A549 (cell line): ENCODE measurements at regions of chr3 and their contacts with region 1.

Region 1: DNA sequence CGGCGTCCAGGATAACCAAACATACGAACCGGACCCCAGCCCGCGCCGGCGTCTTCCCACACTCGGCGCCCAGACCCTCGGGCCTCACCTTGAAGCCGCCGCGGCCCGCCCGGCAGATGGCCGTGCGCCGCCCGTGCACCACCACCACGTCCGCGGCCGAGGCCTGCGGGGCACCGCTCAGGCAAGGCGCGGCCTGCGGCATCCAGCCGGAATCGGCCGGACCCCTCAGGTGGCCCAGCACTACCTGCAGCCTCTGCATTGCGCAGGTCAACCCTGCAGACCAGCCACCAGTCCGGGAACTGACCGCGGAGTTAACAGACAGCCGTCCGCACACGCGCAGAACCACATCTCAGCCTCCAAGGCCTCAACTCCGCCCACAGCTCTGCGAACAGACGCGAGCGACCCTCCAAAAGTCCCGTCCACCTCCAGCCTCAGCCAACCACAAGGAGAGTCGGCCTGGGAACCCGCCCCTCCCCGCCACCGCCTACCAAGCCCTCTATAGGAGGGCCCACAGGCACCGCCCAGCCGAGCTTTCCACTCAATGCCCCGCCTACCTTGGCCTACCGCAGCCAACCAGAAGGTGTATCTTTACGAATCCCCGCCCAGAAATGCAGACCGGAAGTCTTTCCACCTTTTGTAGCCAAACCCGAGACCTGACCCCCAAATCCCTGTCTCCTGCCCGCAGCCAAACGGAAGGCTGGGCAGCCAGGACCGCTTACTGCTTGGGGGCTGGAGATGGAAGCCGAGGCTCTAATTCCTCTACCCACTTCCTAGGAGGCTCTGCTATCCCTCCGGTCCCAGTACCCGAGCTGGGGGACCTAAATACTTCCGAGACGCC is at the start of gene ACAA1:
- DNase-seq: peak; percentile 97 to 99
- ATAC-seq: peak; percentile 87 to 96
- H3K4me3 ChIP-seq: peak within 1 kb of the TSS; percentile 81
- H3K27ac ChIP-seq: peak within 1 kb of the TSS; percentile 88 to 92
- H3K4me1 ChIP-seq: peaks cover 36% of the 10 kb centered on the region
- CTCF ChIP-seq: no peak
- EP300 ChIP-seq: no peak
- POLR2A ChIP-seq: peak; percentile 90
- RAD21 ChIP-seq: no peak
- polyA plus RNA-seq, gene ACAA1: 34.8 and 36.8 TPM in 2 replicates

Region 2: GRCh38 chr3:38154033-38154494 is 17.1 kb after region 1 on chr3:
- CTCF ChIA-PET with region 1: interaction called, 3 read pairs
- POLR2A ChIA-PET with region 1: interaction called, 11 read pairs
- DNase-seq: no peak
- ATAC-seq: no peak
- H3K4me3 ChIP-seq: no peak overlapping the region
- H3K27ac ChIP-seq: no peak overlapping the region
- H3K4me1 ChIP-seq: 0 out of 3 replicates have a peak, but pooled peaks cover 3% of the 10 kb centered on the region
- CTCF ChIP-seq: no peak
- EP300 ChIP-seq: no peak
- POLR2A ChIP-seq: no peak
- RAD21 ChIP-seq: no peak

Region 3: GRCh38 chr3:38164966-38165680 is 28.1 kb after region 1 on chr3 and contains the start of gene OXSR1:
- CTCF ChIA-PET with region 1: interaction called, 19 read pairs
- POLR2A ChIA-PET with region 1: interaction called, 75 read pairs
- DNase-seq: peak; percentile 99 to 100
- ATAC-seq: peak; percentile 95
- H3K4me3 ChIP-seq: peak within 1 kb of the TSS; percentile 64
- H3K27ac ChIP-seq: peak within 1 kb of the TSS; percentile 96 to 99
- H3K4me1 ChIP-seq: peaks cover 27% of the 10 kb centered on the region
- CTCF ChIP-seq: no peak
- EP300 ChIP-seq: no peak
- POLR2A ChIP-seq: peak; percentile 83
- RAD21 ChIP-seq: no peak
- polyA plus RNA-seq, gene OXSR1: 40.1 and 44.0 TPM in 2 replicates